BJ (cell line): ENCODE measurements at regions of chr2 and their contacts with region 1.

Region 1: GRCh38 chr2:230847883-230848388 is 16.8 kb upstream of the ITM2C start:
- DNase-seq: no peak
- H3K4me3 ChIP-seq: no peak overlapping the region
- H3K27me3 ChIP-seq: peaks cover 6% of the 10 kb centered on the region
- CTCF ChIP-seq: peak; percentile 98

Region 2: GRCh38 chr2:230830428-230830827 is 17.5 kb before region 1 on chr2:
- CTCF ChIA-PET with region 1: interaction called, 10 read pairs
- POLR2A ChIA-PET with region 1: no interaction called
- DNase-seq: no peak
- H3K4me3 ChIP-seq: no peak overlapping the region
- H3K27me3 ChIP-seq: peaks cover 9% of the 10 kb centered on the region
- CTCF ChIP-seq: no peak

Region 3: DNA sequence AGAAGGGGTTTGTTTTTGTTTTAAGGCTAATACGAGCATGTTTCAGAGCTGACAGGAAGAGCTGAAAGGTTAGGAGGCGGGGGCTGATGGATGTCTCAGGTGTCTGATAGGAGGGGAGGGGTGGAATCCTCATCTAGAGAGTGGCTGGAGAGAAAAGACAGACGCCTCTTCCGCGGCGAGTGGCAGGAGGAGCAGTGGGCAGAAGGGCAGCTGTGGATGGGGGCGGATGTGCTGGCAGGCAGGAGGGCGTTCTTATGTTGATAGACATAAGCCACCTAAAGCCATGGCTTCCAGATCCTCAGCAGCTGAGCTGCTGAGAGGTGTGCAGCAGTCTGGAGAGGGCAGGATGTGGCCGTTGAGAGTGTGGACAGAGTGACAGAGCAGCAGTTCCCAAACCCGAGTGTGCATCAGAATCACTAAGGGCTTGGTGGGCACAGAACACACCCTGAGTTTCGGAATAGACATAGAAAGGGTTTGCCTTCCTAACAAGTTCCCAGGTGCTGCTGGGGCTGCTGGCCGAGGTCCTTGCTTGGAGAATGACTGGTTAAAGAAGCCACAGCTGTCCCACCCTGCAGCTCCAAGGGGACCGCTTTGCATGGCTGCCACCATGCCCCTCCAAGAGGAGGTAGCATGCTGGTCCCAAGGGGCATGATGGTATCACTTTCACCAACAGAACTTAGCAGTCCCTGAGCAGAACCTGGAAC is 13.8 kb after region 1 on chr2:
- CTCF ChIA-PET with region 1: interaction called, 18 read pairs
- POLR2A ChIA-PET with region 1: no interaction called
- DNase-seq: no peak
- H3K4me3 ChIP-seq: no peak overlapping the region
- H3K27me3 ChIP-seq: peaks cover 16% of the 10 kb centered on the region
- CTCF ChIP-seq: no peak